Mammary epithelial cell (primary cell): ENCODE measurements at regions of chr1 and their contacts with region 1.

Region 1: GRCh38 chr1:54872036-54872331 is 15.0 kb downstream of the DHCR24 start:
- DNase-seq: no peak
- H3K4me3 ChIP-seq: no peak overlapping the region
- H3K27ac ChIP-seq: no peak overlapping the region
- H3K4me1 ChIP-seq: peaks cover 16% of the 10 kb centered on the region
- H3K27me3 ChIP-seq: no peaks in the 10 kb centered on the region
- CTCF ChIP-seq: no peak

Region 2: GRCh38 chr1:54934869-54935268 is 62.9 kb after region 1 on chr1:
- CTCF ChIA-PET with region 1: no interaction called
- dilution Hi-C with region 1: loop called (anchors 5 kb)
- in situ Hi-C with region 1: no loop called
- intact Hi-C with region 1: no loop called
- DNase-seq: peak; percentile 58
- H3K4me3 ChIP-seq: no peak overlapping the region
- H3K27ac ChIP-seq: no peak overlapping the region
- H3K4me1 ChIP-seq: peaks cover 13% of the 10 kb centered on the region
- H3K27me3 ChIP-seq: no peaks in the 10 kb centered on the region
- CTCF ChIP-seq: no peak